Ascending aorta (tissue), 2 donors: ENCODE measurements at regions of chr6 and their contacts with region 1.

Region 1: GRCh38 chr6:26537846-26538571 is at the start of gene HMGN4:
- DNase-seq: peak in 1 of 2 donors; percentile 90
- H3K4me3 ChIP-seq: peak within 1 kb of the TSS; percentile 89 to 98
- H3K27ac ChIP-seq: peak within 1 kb of the TSS; percentile 92 to 99
- H3K4me1 ChIP-seq: peaks cover 5 to 32% of the 10 kb centered on the region in 2 donors
- H3K27me3 ChIP-seq: no peaks in the 10 kb centered on the region
- CTCF ChIP-seq: peak in 1 of 3 experiments; percentile 12
- total RNA-seq, gene HMGN4: 20.6 TPM

Region 2: GRCh38 chr6:26285143-26286134 is 252.6 kb before region 1 on chr6:
- intact Hi-C with region 1: loop called (anchors 5 kb)
- DNase-seq: peak; percentile 92 to 99
- H3K4me3 ChIP-seq: peak overlapping the region; percentile 71 to 79
- H3K27ac ChIP-seq: peak overlapping the region; percentile 93 to 97
- H3K4me1 ChIP-seq: no peaks in the 10 kb centered on the region
- H3K27me3 ChIP-seq: no peaks in the 10 kb centered on the region
- CTCF ChIP-seq: no peak

Region 3: DNA sequence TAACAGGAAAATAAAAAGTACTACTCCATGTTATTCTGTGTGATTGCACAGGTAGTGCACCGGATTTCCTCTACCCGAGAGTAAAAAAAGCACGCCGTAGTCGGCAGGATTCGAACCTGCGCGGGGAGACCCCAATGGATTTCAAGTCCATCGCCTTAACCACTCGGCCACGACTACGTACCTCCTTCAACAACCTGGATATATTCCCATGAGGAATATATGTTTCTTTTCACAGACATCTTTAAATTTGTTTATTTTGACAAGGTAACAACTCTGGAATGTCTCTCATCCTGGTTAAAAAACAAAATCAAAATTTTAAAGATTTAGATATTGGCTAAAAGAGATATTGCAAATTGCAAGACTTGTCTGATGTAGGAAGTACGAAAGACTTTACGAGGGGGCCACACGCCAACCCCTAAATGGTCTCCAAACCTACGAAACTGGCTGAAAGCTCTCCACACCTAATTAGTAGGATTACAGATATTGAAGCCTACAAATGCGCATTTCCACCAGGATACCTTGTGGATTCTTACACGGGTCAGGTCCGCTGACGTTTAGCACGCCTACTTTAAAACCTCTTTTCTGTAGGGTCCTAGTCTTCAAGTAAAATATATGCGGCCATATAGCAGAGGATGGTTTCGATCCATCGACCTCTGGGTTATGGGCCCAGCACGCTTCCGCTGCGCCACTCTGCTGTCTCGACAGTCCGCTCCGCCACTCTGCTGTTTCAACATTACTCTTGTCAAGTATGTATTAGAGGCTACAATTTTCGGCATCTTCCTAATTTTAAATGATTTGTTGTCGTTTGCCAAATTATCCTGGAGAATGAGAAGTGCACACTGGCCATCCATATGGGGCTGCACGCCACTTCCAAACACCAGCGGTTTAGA is 225.3 kb before region 1 on chr6:
- intact Hi-C with region 1: loop called (anchors 5 kb)
- DNase-seq: peak; percentile 39 to 85
- H3K4me3 ChIP-seq: peak overlapping the region; percentile 47 to 62
- H3K27ac ChIP-seq: peak overlapping the region; percentile 30 to 47
- H3K4me1 ChIP-seq: peaks cover 0 to 2% of the 10 kb centered on the region in 2 donors
- H3K27me3 ChIP-seq: no peaks in the 10 kb centered on the region
- CTCF ChIP-seq: no peak

Region 4: DNA sequence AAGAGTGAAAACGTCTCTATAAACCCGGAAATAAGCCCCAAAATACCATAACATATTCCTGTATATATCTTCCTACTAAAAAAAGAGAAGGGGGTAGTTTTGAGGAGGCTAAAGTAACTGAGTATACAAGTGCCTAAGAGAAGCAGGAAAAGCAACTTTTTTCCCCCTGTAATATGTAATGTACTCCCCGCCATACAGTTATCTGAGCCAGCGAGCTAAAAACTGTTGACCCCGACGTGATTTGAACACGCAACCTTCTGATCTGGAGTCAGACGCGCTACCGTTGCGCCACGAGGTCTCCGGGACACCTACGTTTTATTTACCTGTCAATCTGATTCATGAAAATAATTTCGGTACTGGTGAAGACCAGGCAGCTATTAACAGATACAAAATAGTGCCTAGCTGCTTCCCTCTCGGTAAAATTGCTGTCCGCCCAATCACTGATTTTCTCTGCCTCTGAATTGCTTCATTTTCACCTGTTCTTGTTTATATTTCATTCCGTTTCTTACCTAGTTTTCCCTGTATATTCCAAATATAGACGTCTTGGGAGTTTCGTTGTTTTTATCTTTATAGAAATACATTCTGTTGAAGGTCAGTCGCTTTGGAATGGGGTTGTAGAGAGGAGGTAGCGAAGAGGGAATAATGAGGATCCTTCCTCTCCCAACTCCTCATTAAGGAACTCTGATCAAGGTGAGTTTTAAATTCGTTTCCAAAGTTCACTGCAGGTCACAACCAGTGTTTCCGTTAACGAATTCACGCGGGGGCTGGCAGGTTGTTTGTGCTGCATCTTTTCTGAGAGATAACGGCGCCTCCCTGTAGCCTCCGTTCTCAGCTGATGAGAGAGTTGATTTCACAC is 206.6 kb before region 1 on chr6:
- intact Hi-C with region 1: no loop called
- DNase-seq: no peak
- H3K4me3 ChIP-seq: no peak overlapping the region
- H3K27ac ChIP-seq: no peak overlapping the region
- H3K4me1 ChIP-seq: no peaks in the 10 kb centered on the region
- H3K27me3 ChIP-seq: peaks cover 30% of the 10 kb centered on the region
- CTCF ChIP-seq: no peak

Region 5: DNA sequence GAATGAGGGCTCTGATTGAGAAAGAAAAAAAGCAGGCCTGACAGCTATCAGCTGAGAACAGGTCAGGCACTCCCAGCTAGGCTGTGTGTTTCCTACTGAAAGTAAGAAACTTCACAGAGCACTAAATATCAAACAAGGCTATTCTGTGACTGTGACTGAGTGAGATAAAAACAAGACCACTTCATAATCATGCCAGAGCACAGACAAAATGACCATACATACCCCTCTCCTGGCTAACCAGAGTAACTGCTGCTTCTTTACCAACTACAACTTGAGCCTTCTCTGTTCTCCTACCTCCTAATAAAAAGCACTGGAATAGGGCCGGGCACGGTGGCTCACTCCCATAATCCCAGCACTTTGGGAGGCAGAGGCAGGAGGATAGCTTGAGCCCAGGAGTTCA is 44.8 kb before region 1 on chr6:
- intact Hi-C with region 1: no loop called
- DNase-seq: no peak
- H3K4me3 ChIP-seq: no peak overlapping the region
- H3K27ac ChIP-seq: no peak overlapping the region
- H3K4me1 ChIP-seq: no peaks in the 10 kb centered on the region
- H3K27me3 ChIP-seq: no peaks in the 10 kb centered on the region
- CTCF ChIP-seq: no peak

Region 6: GRCh38 chr6:26553635-26554446 is 15.8 kb after region 1 on chr6:
- intact Hi-C with region 1: loop called (anchors 1 kb)
- DNase-seq: peak; percentile 57 to 93
- H3K4me3 ChIP-seq: peak overlapping the region; percentile 31 to 59
- H3K27ac ChIP-seq: peak overlapping the region; percentile 70 to 75
- H3K4me1 ChIP-seq: peaks cover 0 to 4% of the 10 kb centered on the region in 2 donors
- H3K27me3 ChIP-seq: no peaks in the 10 kb centered on the region
- CTCF ChIP-seq: no peak

Region 7: GRCh38 chr6:26568601-26569432 is 30.8 kb after region 1 on chr6:
- intact Hi-C with region 1: loop called (anchors 1 kb)
- DNase-seq: peak; percentile 80 to 97
- H3K4me3 ChIP-seq: peak overlapping the region; percentile 61 to 73
- H3K27ac ChIP-seq: peak overlapping the region; percentile 62 to 71
- H3K4me1 ChIP-seq: peaks cover 0 to 4% of the 10 kb centered on the region in 2 donors
- H3K27me3 ChIP-seq: no peaks in the 10 kb centered on the region
- CTCF ChIP-seq: peak in 1 of 3 experiments; percentile 33